ENCODE measurements at regions of chr2 and their contacts with region 1.

Region 1: GRCh38 chr2:24827321-24828237 is 34.4 kb downstream of the CENPO start:
- DNase-seq: peak; percentile 13
- H3K4me3 ChIP-seq: no peak overlapping the region
- H3K27ac ChIP-seq: no peak overlapping the region
- H3K4me1 ChIP-seq: peaks cover 0 to 17% (median 8%) of the 10 kb centered on the region in 3 donors
- H3K27me3 ChIP-seq: no peaks in the 10 kb centered on the region
- CTCF ChIP-seq: peak; percentile 74 to 83 (median 80)
- POLR2A ChIP-seq: no peak

Region 2: DNA sequence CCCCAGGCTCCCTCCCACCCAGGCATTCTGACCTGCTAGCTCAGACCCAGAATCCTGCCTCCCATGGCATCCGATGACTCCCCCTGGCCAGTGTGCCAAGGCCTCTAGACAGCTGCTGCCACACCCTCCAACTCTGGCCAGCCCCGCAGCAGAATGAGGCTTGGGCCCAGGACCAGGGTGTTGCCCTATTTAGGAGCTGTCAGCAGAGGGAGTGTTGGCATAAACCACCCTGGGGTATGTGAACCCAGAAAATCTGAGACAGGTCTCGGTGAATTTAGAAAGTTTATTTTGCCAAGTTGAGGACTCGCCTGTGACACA is 1308.3 kb before region 1 on chr2:
- intact Hi-C with region 1: no loop called
- DNase-seq: no peak
- H3K4me3 ChIP-seq: no peak overlapping the region
- H3K27ac ChIP-seq: peak overlapping the region in 2 of 4 donors; percentile 25 to 39
- H3K4me1 ChIP-seq: peaks cover 0 to 45% (median 32%) of the 10 kb centered on the region in 3 donors
- H3K27me3 ChIP-seq: no peaks in the 10 kb centered on the region
- CTCF ChIP-seq: peak in 3 of 6 experiments; percentile 7 to 18 (median 14)
- POLR2A ChIP-seq: no peak

Region 3: GRCh38 chr2:24409700-24410556 is 417.7 kb before region 1 on chr2:
- intact Hi-C with region 1: loop called (anchors 5 kb)
- DNase-seq: no peak
- H3K4me3 ChIP-seq: no peak overlapping the region
- H3K27ac ChIP-seq: no peak overlapping the region
- H3K4me1 ChIP-seq: peaks cover 0 to 6% (median 0%) of the 10 kb centered on the region in 3 donors
- H3K27me3 ChIP-seq: peaks cover 0 to 18% (median 0%) of the 10 kb centered on the region in 4 donors
- CTCF ChIP-seq: peak; percentile 71 to 88 (median 80)
- POLR2A ChIP-seq: no peak

Measured in esophagus squamous epithelium (tissue), 5 donors.